ENCODE measurements at regions of chr9 and their contacts with region 1.

Region 1: DNA sequence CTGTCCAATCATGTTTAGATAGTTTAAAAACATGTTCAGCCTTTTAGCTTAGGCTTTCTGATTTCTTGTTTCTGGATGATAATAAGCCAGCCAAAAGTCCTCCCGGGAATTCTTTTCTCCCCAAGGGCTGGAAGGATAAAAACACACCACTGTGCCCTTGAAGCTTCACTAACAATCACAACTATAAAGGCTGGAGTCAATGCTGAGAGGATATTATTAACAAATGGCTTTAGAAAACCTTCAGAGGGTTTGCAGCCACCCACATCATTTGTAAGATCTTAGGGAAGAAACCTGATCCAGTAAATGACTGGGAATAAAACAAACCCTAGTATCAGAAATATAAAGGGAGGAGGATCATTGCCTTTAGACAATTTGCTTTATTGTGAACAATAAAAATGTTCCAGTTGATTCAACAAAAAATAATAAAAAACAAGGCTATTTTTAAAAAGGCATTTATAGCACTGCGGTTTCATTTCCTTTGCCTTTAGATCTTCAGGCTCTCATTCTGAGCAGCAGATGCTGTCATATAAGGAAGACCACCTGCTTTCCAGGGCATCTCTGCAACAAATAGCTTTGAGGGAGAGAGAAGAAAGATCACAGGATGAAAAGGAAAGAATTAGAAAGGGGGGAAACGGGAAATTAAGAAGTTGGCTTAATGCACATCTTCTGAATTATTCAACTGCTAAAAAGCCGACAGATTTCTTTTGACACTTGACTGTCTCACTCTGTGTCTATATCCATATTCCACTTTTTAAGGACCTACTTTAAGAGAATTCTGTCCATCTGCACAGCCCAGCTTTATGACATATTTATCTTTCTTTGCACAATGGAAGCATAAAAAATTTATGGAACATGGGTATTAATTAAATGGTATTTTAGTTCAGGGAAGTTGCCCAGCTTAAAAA is 277.2 kb upstream of the SLC24A2 start:
- DNase-seq: peak; percentile 64
- H3K4me3 ChIP-seq: peak overlapping the region; percentile 21
- H3K27ac ChIP-seq: peak overlapping the region; percentile 67
- H3K4me1 ChIP-seq: peaks cover 28% of the 10 kb centered on the region
- CTCF ChIP-seq: no peak

Region 2: DNA sequence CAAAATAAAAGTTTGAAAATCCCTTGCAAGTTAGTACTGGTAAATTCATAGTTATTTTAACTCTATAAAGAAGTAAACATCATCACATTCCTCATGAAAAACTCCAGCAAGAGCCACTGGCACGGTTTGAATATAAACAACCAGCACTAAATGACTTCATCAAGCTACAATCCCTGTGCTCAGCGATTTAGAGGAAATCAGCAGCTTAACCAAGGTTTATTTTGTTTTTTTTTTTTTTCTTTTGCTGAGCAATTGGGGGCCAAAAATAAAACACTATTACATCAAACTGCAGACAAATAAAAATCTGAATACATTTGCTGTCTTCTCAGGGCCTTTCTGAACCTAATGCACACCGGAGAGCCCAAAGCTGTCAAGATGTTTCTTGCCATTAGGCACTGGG is 171.0 kb before region 1 on chr9:
- CTCF ChIA-PET with region 1: no interaction called
- POLR2A ChIA-PET with region 1: no interaction called
- intact Hi-C with region 1: no loop called
- DNase-seq: no peak
- H3K4me3 ChIP-seq: no peak overlapping the region
- H3K27ac ChIP-seq: no peak overlapping the region
- H3K4me1 ChIP-seq: no peaks in the 10 kb centered on the region
- CTCF ChIP-seq: no peak

Region 3: GRCh38 chr9:20054734-20055133 is 11.3 kb before region 1 on chr9:
- CTCF ChIA-PET with region 1: no interaction called
- POLR2A ChIA-PET with region 1: interaction called, 12 read pairs
- intact Hi-C with region 1: no loop called
- DNase-seq: no peak
- H3K4me3 ChIP-seq: no peak overlapping the region
- H3K27ac ChIP-seq: no peak overlapping the region
- H3K4me1 ChIP-seq: no peaks in the 10 kb centered on the region
- CTCF ChIP-seq: no peak

Region 4: DNA sequence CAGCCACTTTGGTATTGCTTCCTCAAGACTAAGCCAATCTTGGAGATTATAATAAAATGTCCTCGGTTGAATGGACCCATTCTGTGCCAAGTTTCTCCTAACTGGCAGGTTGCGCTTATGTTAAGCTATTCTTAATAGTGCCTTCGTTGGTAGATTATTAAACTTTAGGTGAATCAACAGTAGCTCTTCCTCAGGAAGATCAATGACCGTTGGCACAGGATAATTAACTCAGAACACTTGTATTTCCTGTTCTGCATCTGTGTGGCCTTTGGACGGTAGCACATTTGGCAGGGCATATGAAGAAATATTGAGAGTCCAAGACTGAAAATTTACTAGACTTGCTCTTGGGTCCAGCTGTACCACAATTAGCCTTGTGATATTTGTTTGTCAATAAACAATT is 153.4 kb after region 1 on chr9:
- CTCF ChIA-PET with region 1: no interaction called
- POLR2A ChIA-PET with region 1: no interaction called
- intact Hi-C with region 1: no loop called
- DNase-seq: no peak
- H3K4me3 ChIP-seq: no peak overlapping the region
- H3K27ac ChIP-seq: no peak overlapping the region
- H3K4me1 ChIP-seq: no peaks in the 10 kb centered on the region
- CTCF ChIP-seq: no peak

Region 5: DNA sequence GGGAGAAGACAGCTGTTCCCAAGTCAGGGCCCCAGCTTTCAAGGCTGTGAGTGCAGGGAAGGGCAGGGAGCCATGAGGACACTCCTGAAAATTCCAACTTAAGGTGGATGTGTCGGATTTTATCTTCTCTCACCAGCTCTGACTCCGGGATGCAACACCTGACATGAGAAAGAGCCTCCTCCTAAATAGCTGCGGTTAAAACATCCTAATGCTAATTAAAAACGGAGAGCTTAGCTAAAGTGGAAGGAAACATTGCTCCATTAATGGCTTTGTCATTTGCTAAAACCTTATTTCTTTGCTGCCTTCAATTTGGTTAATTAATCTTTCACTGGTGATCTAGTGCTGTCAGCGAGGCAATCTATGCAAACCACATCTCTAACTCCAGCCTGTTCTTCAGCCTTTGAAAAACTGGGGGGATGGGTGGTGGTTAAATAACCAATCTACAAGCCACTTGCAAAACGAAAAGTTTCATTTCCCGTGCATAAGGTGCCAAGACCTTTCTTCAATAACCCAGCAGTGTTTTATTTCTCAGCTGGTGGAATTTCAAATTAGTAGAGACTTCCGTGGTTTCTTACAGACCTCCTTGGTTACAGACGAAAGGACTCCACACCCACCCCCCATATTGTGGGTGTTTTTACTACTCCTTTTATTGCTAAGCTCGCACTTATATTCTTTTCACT is 176.6 kb after region 1 on chr9:
- CTCF ChIA-PET with region 1: no interaction called
- POLR2A ChIA-PET with region 1: no interaction called
- intact Hi-C with region 1: loop called (anchors 10 kb)
- DNase-seq: peak; percentile 84
- H3K4me3 ChIP-seq: peak overlapping the region; percentile 52
- H3K27ac ChIP-seq: peak overlapping the region; percentile 60
- H3K4me1 ChIP-seq: peaks cover 37% of the 10 kb centered on the region
- CTCF ChIP-seq: no peak

Measured in OCI-LY7 (cell line).